Activated naive CD4-positive, alpha-beta T cell treated with anti-CD3 and anti-CD28 coated beads, Interleukin-2, amount 10 ng/mL, durations not matched to agents 7 days and 5 days (primary cell): ENCODE measurements at regions of chr12 and their contacts with region 1.

Region 1: DNA sequence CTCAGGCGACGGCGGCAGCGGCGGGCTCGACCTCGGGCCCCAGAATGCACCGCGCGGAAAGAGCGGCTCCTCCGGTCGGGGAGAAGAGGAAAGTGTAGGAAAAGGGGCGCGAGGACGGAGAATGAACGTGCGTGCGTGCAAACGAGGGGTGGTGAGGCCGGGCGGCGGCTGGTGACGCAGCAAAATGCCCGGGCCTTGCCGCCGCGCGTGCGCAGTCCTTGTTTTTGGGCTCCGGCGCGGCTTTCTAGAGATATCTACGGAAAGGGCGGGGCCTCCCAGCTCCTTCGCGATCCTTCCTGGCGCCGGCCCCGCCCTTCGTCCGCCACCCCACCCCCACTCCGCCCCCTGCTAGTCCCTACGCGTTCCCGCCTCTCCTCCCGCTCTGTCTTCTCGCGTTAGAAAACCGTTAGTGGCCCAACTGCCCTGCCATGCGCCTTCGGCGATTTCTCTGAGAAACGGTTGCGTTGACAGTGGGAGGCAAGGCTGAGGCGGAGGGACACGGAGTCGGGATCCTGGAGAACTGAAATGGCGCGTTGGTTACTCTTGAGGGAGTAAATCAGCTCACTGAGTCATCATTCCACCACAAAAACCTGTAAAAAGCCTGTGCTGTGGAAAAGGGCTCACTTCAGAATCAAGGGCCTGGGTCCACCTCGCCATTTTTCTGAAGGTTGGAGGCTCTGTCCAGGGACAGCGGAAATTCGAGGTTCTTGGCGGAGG is at the start of gene PTGES3:
- DNase-seq: peak; percentile 98
- H3K4me3 Mint-ChIP-seq: peak within 1 kb of the TSS; percentile 100
- H3K27ac Mint-ChIP-seq: peak within 1 kb of the TSS; percentile 100
- H3K4me1 Mint-ChIP-seq: peaks cover 35% of the 10 kb centered on the region
- H3K27me3 Mint-ChIP-seq: no peaks in the 10 kb centered on the region

Region 2: GRCh38 chr12:56645717-56646446 is 42.4 kb before region 1 on chr12 and contains the start of gene ATP5F1B:
- CTCF ChIA-PET with region 1: interaction called, 14 read pairs
- DNase-seq: peak; percentile 96
- H3K4me3 Mint-ChIP-seq: peak within 1 kb of the TSS; percentile 92
- H3K27ac Mint-ChIP-seq: peak within 1 kb of the TSS; percentile 96
- H3K4me1 Mint-ChIP-seq: peaks cover 35% of the 10 kb centered on the region
- H3K27me3 Mint-ChIP-seq: no peaks in the 10 kb centered on the region

Region 3: DNA sequence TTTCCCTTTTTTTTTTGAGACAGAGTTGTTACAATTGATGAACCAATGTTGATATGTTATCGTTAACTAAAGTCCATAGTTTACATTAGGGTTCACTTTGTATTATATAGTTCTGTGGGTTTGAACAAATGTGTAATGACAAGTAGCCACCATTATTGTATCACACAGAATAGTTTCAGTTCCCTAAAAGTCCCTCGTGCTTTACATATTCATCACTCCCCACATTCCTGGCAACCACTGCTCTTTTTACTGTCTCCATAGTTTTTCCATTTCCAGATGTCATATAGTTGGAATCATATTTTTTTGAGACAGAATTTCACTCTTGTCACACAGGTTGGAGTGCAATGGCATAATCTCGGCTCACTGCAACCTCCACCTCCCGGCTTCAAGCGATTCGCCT is 87.4 kb after region 1 on chr12:
- CTCF ChIA-PET with region 1: no interaction called
- DNase-seq: no peak
- H3K4me3 Mint-ChIP-seq: no peak overlapping the region
- H3K27ac Mint-ChIP-seq: no peak overlapping the region
- H3K4me1 Mint-ChIP-seq: no peaks in the 10 kb centered on the region
- H3K27me3 Mint-ChIP-seq: no peaks in the 10 kb centered on the region